Posterior cingulate gyrus (tissue), 11 donors: ENCODE measurements at regions of chr4 and their contacts with region 1.

Region 1: GRCh38 chr4:1346781-1347409 is at the start of gene UVSSA:
- DNase-seq: peak; percentile 100

Region 2: GRCh38 chr4:1289207-1290164 is 57.4 kb before region 1 on chr4 and contains the start of gene MAEA:
- intact Hi-C with region 1: loop called (anchors 2 kb)
- DNase-seq: peak; percentile 96 to 100 (median 97)

Region 3: GRCh38 chr4:1368421-1369090 is 21.7 kb after region 1 on chr4:
- intact Hi-C with region 1: no loop called
- DNase-seq: peak in 6 of 10 donors; percentile 1 to 72 (median 38)